ENCODE measurements at regions of chr17 and their contacts with region 1.

Region 1: DNA sequence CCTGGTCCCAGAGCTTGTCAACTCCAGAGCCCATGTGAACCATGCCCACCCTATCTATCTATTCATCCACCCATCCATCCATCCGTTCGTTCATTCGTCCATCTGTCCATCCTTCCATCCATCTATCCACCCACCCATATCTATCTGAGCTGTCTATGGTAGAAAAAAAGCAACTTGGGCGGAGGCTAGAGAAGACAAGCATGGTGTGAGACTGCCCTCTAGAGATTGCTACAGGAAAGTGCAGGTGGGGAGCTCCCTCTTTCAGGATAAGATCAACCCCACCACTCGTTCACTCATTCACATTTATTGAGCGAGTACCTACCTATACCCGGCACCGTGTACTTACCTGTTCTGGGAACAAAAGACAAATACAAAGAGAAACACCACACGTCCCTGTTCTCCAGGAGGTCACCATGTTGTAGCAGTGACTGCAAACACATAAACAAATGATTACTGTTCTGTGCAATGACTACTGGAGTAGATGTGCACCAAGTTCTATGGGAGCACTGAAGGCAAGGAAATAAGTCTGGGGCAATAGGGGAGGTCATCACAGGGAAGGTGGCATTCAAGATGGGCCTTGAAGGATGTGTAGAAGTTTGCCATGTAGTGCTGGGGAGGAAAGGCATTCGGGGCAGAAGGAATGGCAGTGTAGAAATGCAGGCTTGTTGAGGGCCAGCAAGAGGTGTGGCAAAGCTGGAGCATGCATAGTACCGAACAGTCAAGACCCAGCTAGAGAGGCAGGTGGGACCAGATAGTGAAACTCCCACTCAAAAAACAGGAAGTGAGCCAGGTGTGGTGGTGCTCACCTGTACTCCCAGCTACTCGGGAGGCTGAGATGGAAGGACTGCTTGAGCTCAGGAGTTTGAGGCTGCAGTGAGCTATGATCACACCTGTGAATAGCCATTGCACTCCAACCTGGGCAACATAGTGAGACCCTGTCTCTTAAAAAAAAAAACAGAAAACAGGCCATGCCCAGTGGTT is 13.4 kb upstream of the ATP5MC1 start:
- DNase-seq: peak; percentile 50 to 67 (median 66)
- H3K4me3 ChIP-seq: no peak overlapping the region
- H3K4me3 Mint-ChIP-seq: no peak overlapping the region
- H3K27ac ChIP-seq: no peak overlapping the region
- H3K27ac Mint-ChIP-seq: no peak overlapping the region
- H3K4me1 ChIP-seq: no peaks in the 10 kb centered on the region
- H3K4me1 Mint-ChIP-seq: peaks cover 2% of the 10 kb centered on the region
- H3K27me3 ChIP-seq: no peaks in the 10 kb centered on the region
- H3K27me3 Mint-ChIP-seq: peaks cover 10 to 15% (median 13%) of the 10 kb centered on the region in 3 donors
- CTCF ChIP-seq: peak; percentile 90

Region 2: GRCh38 chr17:48678141-48678971 is 200.9 kb before region 1 on chr17:
- intact Hi-C with region 1: loop called (anchors 2 to 5 kb)
- DNase-seq: peak; percentile 32 to 49 (median 36)
- H3K4me3 ChIP-seq: no peak overlapping the region
- H3K4me3 Mint-ChIP-seq: peak overlapping the region in 1 of 2 donors; percentile 56
- H3K27ac ChIP-seq: no peak overlapping the region
- H3K27ac Mint-ChIP-seq: peak overlapping the region in 1 of 7 donors; percentile 54
- H3K4me1 ChIP-seq: peaks cover 0 to 3% of the 10 kb centered on the region in 2 donors
- H3K4me1 Mint-ChIP-seq: peaks cover 2% of the 10 kb centered on the region
- H3K27me3 ChIP-seq: peaks cover 19 to 58% of the 10 kb centered on the region in 2 donors
- H3K27me3 Mint-ChIP-seq: peaks cover 37 to 76% (median 48%) of the 10 kb centered on the region in 3 donors
- CTCF ChIP-seq: peak; percentile 98

Region 3: GRCh38 chr17:48729335-48730239 is 149.6 kb before region 1 on chr17:
- intact Hi-C with region 1: loop called in 1 of 2 experiments (anchors 5 kb)
- DNase-seq: no peak
- H3K4me3 ChIP-seq: no peak overlapping the region
- H3K4me3 Mint-ChIP-seq: peak overlapping the region in 1 of 2 donors; percentile 79
- H3K27ac ChIP-seq: no peak overlapping the region
- H3K27ac Mint-ChIP-seq: no peak overlapping the region
- H3K4me1 ChIP-seq: peaks cover 0 to 3% of the 10 kb centered on the region in 2 donors
- H3K4me1 Mint-ChIP-seq: peaks cover 20% of the 10 kb centered on the region
- H3K27me3 ChIP-seq: peaks cover 95 to 99% of the 10 kb centered on the region in 2 donors
- H3K27me3 Mint-ChIP-seq: peaks cover 97 to 99% (median 98%) of the 10 kb centered on the region in 3 donors
- CTCF ChIP-seq: no peak

Region 4: DNA sequence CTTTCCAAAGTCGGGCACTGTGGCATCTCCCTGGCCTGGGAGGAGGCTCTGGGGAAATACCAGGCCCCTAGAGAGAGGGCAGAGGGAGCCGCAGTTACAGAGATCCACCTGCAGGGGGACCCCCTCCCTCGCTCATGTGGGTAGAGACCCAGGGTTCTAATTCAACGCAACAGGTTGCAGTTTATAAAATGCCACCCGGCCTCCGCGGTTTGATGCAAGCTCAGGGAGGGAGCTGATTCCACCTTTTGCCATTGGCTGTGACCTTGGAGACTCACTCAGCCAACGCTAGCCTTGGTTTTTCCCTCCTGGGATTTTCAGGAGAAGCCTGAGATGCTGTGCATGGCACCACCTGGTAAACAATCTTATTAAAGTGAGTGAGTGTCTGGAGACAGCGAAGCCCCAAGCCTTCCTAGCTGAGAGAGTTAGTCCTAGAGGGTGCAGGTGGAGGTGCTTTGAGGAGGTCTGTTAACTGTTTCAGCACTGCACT is 74.2 kb before region 1 on chr17:
- intact Hi-C with region 1: loop called (anchors 2 kb)
- DNase-seq: peak; percentile 24 to 53 (median 49)
- H3K4me3 ChIP-seq: no peak overlapping the region
- H3K4me3 Mint-ChIP-seq: no peak overlapping the region
- H3K27ac ChIP-seq: no peak overlapping the region
- H3K27ac Mint-ChIP-seq: no peak overlapping the region
- H3K4me1 ChIP-seq: peaks cover 8% of the 10 kb centered on the region in 2 donors
- H3K4me1 Mint-ChIP-seq: peaks cover 12% of the 10 kb centered on the region
- H3K27me3 ChIP-seq: peaks cover 0 to 2% of the 10 kb centered on the region in 2 donors
- H3K27me3 Mint-ChIP-seq: peaks cover 7 to 34% (median 22%) of the 10 kb centered on the region in 3 donors
- CTCF ChIP-seq: peak; percentile 96

Region 5: DNA sequence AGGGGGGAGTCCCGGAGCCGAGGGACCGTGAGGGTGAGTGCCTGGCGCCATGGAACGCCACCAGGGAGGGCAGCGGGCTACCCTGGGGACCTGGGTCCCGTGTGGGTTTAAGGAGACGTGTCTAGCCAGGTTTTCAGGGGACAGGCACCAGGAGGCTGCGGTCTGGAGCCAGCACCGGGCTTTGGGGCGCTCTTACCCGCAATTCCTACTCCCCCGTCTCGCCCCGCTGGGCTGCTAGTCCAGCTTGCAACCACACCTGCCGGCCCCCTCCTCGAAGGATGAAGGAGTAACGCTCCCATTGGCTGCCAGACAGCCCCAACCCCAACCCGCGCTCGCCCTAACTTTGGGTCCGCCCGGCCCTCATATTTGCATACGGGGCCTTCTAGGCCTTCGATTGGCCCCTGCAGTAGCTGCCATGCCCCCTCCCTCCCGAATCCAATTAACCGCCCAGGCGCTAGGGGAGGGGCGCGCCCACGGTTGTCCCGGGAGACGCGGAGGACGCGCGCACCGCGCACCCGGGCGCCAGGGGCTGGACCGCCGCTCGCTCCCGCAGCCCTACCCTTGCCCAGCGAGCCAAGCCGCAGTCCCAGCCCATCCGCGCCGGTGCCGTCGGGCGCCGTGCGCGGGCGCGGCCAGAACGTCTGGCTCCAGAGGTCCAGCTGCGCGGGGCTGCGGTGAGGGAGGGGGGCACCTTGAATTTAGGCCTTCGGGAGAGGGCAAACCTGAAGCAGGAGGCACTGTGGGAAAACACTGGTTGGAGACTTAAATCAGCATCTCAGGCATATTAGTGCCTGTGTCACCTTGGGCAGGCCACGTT is 62.2 kb before region 1 on chr17 and contains the start of gene TTLL6:
- intact Hi-C with region 1: loop called in 1 of 2 experiments (anchors 2 kb)
- DNase-seq: peak; percentile 29 to 57 (median 34)
- H3K4me3 ChIP-seq: peak within 1 kb of the TSS in 1 of 3 experiments; percentile 51
- H3K4me3 Mint-ChIP-seq: peak within 1 kb of the TSS; percentile 25 to 89
- H3K27ac ChIP-seq: no peak within 1 kb of the TSS
- H3K27ac Mint-ChIP-seq: peak within 1 kb of the TSS in 1 of 7 donors; percentile 72
- H3K4me1 ChIP-seq: peaks cover 10 to 12% of the 10 kb centered on the region in 2 donors
- H3K4me1 Mint-ChIP-seq: peaks cover 11% of the 10 kb centered on the region
- H3K27me3 ChIP-seq: peaks cover 49 to 50% of the 10 kb centered on the region in 2 donors
- H3K27me3 Mint-ChIP-seq: peaks cover 61 to 87% (median 65%) of the 10 kb centered on the region in 3 donors
- CTCF ChIP-seq: no peak
- polyA plus RNA-seq, gene TTLL6: not detected

Region 6: DNA sequence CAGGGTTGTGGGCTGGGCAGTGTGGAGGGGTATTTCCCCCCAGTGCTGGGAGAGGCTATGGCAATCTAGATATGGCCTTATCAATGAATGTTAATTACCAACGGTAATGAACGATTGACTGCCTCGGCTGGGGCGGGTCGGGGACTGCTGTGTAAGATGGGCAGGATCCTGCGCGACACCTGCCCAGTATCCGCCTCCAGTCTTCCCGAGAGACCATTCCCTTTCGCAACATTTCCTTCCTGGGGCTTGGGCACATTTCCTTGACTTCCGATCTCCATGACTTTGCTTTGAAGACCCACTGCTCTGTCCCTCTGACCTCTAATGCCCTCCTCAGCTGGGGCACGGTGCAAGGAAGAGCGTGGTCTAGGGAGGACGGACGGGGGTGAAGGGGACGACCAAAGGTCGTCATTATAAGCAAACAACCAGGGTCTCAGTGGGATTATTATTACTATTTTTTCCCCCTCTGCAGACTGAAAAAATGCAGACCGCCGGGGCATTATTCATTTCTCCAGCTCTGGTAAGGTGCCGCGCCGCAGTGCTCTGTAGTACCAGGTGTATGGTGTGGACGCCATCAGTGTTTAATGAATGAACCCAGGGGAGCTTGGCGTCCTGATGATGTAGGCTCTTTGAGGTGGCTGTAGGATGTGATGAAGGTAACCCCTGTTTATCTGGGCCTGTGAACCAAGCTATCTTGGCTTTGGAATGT is 13.9 kb after region 1 on chr17:
- intact Hi-C with region 1: no loop called
- DNase-seq: peak in 1 of 3 donors; percentile 39
- H3K4me3 ChIP-seq: peak overlapping the region; percentile 68 to 82 (median 71)
- H3K4me3 Mint-ChIP-seq: peak overlapping the region; percentile 94 to 100
- H3K27ac ChIP-seq: peak overlapping the region; percentile 50 to 85
- H3K27ac Mint-ChIP-seq: peak overlapping the region; percentile 93 to 99 (median 95)
- H3K4me1 ChIP-seq: peaks cover 17 to 25% of the 10 kb centered on the region in 2 donors
- H3K4me1 Mint-ChIP-seq: peaks cover 20% of the 10 kb centered on the region
- H3K27me3 ChIP-seq: no peaks in the 10 kb centered on the region
- H3K27me3 Mint-ChIP-seq: peaks cover 0 to 4% (median 2%) of the 10 kb centered on the region in 3 donors
- CTCF ChIP-seq: no peak

Region 7: DNA sequence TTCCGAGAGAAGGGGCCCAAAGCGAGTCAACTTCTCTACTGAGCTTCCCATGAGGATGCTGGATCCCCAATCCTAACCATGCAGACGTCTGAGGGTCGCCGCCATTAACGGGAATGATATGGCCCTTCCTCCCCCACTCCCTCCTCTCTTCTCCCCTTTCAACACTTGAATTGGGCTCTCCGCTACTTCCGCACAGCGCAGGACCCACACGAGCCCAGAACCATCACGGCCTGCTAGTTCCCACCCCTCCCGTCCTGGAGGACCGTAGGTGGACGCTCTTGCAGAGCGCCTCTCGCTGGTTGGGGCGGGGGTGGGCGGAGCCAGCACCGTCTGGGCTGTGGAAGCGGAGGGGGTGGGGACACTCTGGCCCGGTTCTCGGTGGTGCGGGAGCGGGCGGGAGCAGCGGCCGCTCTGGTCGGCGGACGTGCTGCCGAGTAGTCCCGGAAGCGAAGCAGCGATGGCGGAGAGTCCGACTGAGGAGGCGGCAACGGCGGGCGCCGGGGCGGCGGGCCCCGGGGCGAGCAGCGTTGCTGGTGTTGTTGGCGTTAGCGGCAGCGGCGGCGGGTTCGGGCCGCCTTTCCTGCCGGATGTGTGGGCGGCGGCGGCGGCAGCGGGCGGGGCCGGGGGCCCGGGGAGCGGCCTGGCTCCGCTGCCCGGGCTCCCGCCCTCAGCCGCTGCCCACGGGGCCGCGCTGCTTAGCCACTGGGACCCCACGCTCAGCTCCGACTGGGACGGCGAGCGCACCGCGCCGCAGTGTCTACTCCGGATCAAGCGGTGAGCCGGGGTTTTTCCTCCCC is 29.0 kb after region 1 on chr17 and contains the start of gene UBE2Z:
- intact Hi-C with region 1: no loop called
- DNase-seq: peak; percentile 87 to 93 (median 88)
- H3K4me3 ChIP-seq: peak within 1 kb of the TSS; percentile 37 to 82 (median 68)
- H3K4me3 Mint-ChIP-seq: peak within 1 kb of the TSS; percentile 93 to 98
- H3K27ac ChIP-seq: peak within 1 kb of the TSS; percentile 93 to 98
- H3K27ac Mint-ChIP-seq: peak within 1 kb of the TSS; percentile 96 to 100 (median 98)
- H3K4me1 ChIP-seq: peaks cover 25 to 37% of the 10 kb centered on the region in 2 donors
- H3K4me1 Mint-ChIP-seq: peaks cover 35% of the 10 kb centered on the region
- H3K27me3 ChIP-seq: no peaks in the 10 kb centered on the region
- H3K27me3 Mint-ChIP-seq: peaks cover 0 to 3% (median 0%) of the 10 kb centered on the region in 3 donors
- CTCF ChIP-seq: no peak
- polyA plus RNA-seq, gene UBE2Z: 35.8 to 44.7 (median 40.0) TPM

Region 8: GRCh38 chr17:49022391-49022941 is 143.3 kb after region 1 on chr17:
- intact Hi-C with region 1: loop called in 1 of 2 experiments (anchors 10 kb)
- DNase-seq: no peak
- H3K4me3 ChIP-seq: no peak overlapping the region
- H3K4me3 Mint-ChIP-seq: no peak overlapping the region
- H3K27ac ChIP-seq: no peak overlapping the region
- H3K27ac Mint-ChIP-seq: no peak overlapping the region
- H3K4me1 ChIP-seq: no peaks in the 10 kb centered on the region
- H3K4me1 Mint-ChIP-seq: no peaks in the 10 kb centered on the region
- H3K27me3 ChIP-seq: peaks cover 0 to 5% of the 10 kb centered on the region in 2 donors
- H3K27me3 Mint-ChIP-seq: peaks cover 9 to 26% (median 23%) of the 10 kb centered on the region in 3 donors
- CTCF ChIP-seq: no peak

Measured in CD14-positive monocyte (primary cell).